ENCODE measurements at regions of chr2 and their contacts with region 1.

Region 1: GRCh38 chr2:241289597-241289996 is 25.9 kb downstream of the HDLBP start:
- DNase-seq: no peak
- H3K4me3 ChIP-seq: no peak overlapping the region
- H3K27ac ChIP-seq: no peak overlapping the region
- H3K4me1 ChIP-seq: peaks cover 23% of the 10 kb centered on the region
- H3K27me3 ChIP-seq: no peaks in the 10 kb centered on the region
- CTCF ChIP-seq: peak; percentile 1 to 26

Region 2: GRCh38 chr2:241271641-241272297 is 17.8 kb before region 1 on chr2:
- CTCF ChIA-PET with region 1: no interaction called
- dilution Hi-C with region 1: no loop called
- in situ Hi-C with region 1: no loop called
- intact Hi-C with region 1: loop called (anchors 2 kb)
- DNase-seq: peak; percentile 75
- H3K4me3 ChIP-seq: peak overlapping the region; percentile 60 to 74 (median 61)
- H3K27ac ChIP-seq: peak overlapping the region; percentile 56
- H3K4me1 ChIP-seq: peaks cover 31% of the 10 kb centered on the region
- H3K27me3 ChIP-seq: no peaks in the 10 kb centered on the region
- CTCF ChIP-seq: no peak

Region 3: DNA sequence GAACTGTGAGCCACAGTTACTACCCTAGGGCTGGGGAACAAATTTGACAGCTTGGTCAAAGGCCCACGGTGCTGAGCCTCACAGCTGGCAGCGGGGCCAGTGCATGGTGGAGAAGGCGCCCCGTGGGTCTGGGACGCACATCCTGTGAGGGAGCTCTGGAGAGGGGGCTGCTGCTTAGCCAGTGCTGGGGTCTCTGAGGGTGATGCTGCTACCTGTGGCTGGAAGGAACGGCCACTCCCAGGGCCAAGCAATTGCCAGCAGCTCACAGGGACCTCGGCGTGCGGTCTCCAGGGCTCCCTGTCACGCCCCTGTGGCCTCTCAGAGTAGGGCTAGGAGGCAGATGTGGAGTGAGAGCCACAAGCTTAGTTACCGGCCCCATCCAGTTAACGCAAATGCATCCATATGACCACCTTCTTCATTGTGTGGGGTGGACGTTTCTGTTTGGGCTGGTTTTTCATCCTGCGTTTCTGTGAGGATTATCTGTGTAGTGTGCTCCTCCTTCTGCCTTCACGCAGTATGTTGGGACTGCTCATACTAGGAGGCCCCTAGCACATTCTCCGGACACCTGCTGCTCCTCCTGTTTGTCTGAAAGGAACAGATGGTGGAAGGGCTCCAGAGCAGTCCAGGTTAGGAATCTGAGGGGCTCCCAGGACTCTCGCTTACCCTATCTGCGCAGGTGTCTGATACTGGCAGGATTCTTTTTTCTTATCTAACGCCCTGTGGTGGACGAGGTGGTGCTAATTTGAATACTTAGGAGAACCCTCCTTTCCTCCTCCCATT is 192.8 kb after region 1 on chr2:
- CTCF ChIA-PET with region 1: no interaction called
- dilution Hi-C with region 1: no loop called
- in situ Hi-C with region 1: no loop called
- intact Hi-C with region 1: no loop called
- DNase-seq: no peak
- H3K4me3 ChIP-seq: no peak overlapping the region
- H3K27ac ChIP-seq: no peak overlapping the region
- H3K4me1 ChIP-seq: no peaks in the 10 kb centered on the region
- H3K27me3 ChIP-seq: no peaks in the 10 kb centered on the region
- CTCF ChIP-seq: no peak

Measured in mammary epithelial cell (primary cell).